Activated CD8-positive, alpha-beta T cell treated with anti-CD3 and anti-CD28 coated beads for 36 hours (primary cell): ENCODE measurements at regions of chr16 and their contacts with region 1.

Region 1: GRCh38 chr16:4455951-4456350 is 18.5 kb downstream of the NMRAL1 start:
- DNase-seq: no peak
- ATAC-seq: no peak
- H3K4me3 Mint-ChIP-seq: no peak overlapping the region
- H3K27ac Mint-ChIP-seq: no peak overlapping the region
- H3K4me1 Mint-ChIP-seq: peaks cover 5% of the 10 kb centered on the region
- H3K27me3 Mint-ChIP-seq: no peaks in the 10 kb centered on the region
- CTCF ChIP-seq: no peak

Region 2: GRCh38 chr16:4465977-4466779 is 10.2 kb after region 1 on chr16:
- CTCF ChIA-PET with region 1: interaction called, 4 read pairs
- POLR2A ChIA-PET with region 1: interaction called, 16 read pairs
- intact Hi-C with region 1: no loop called
- DNase-seq: peak; percentile 83
- ATAC-seq: peak; percentile 94
- H3K4me3 Mint-ChIP-seq: peak overlapping the region; percentile 32
- H3K27ac Mint-ChIP-seq: peak overlapping the region; percentile 89
- H3K4me1 Mint-ChIP-seq: peaks cover 17% of the 10 kb centered on the region
- H3K27me3 Mint-ChIP-seq: no peaks in the 10 kb centered on the region
- CTCF ChIP-seq: no peak